Dorsolateral prefrontal cortex (tissue), 120 donors: ENCODE measurements at regions of chr3 and their contacts with region 1.

Region 1: GRCh38 chr3:197791113-197791891 is at the start of gene LRCH3:
- DNase-seq: peak; percentile 60 to 88 (median 72)
- H3K4me3 ChIP-seq: peak within 1 kb of the TSS; percentile 69 to 98 (median 90)
- H3K27ac ChIP-seq: peak within 1 kb of the TSS; percentile 68 to 98 (median 94)
- H3K27me3 ChIP-seq: no peaks in the 10 kb centered on the region
- CTCF ChIP-seq: peak in 21 of 56 donors; percentile 5 to 45 (median 18)
- total RNA-seq, gene LRCH3: 42.2 to 98.1 (median 64.6) TPM

Region 2: GRCh38 chr3:197811343-197811742 is 20.0 kb after region 1 on chr3:
- intact Hi-C with region 1: no loop called
- DNase-seq: peak in 1 of 10 donors; percentile 33
- H3K4me3 ChIP-seq: peak overlapping the region in 15 of 59 donors; percentile 0 to 37 (median 15)
- H3K27ac ChIP-seq: peak overlapping the region in 49 of 59 donors; percentile 1 to 87 (median 64)
- H3K27me3 ChIP-seq: no peaks in the 10 kb centered on the region
- CTCF ChIP-seq: no peak

Region 3: DNA sequence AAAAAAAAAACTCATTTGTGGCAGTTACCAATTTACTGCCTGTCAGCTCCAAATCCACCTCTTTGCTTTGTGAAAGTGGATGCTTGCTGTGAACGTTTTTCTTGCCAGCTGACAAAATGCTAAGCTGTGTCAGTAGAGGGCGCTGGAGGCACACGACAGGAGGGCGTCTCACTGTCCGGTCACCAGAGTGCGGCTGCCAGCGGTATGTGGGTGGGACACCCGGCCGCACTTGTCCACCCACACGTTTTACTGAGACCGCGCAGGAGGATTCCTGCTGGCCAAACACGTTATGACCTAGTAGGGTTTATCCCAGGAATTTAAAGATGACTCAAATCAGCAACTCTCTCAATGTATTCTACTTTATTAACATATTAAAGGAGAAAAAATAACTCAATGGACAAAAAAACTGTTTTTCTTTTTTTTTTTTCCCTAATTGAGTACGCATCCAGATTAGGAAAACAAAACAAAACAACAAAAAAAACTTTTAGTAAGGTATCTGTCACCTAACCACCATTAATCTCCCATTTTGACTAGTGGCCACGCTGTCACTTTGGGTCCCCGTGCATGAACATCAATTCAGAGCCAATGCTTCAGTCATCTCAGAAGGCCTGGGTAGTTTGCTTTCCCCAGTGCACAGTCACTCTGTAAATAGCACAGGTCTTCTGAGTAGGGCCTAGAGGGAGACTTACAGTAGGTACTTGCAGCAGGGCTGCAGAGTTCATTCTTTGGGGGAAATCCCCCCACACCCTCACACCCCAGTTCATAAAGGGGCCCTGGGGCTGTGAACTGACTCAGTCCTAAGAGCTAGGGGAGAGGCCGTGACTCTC is 114.9 kb after region 1 on chr3:
- intact Hi-C with region 1: loop called in 1 of 2 experiments (anchors 10 kb)
- DNase-seq: peak; percentile 62 to 86 (median 82)
- H3K4me3 ChIP-seq: peak overlapping the region in 26 of 59 donors; percentile 7 to 48 (median 24)
- H3K27ac ChIP-seq: peak overlapping the region in 1 of 59 donors; percentile 4
- H3K27me3 ChIP-seq: no peaks in the 10 kb centered on the region
- CTCF ChIP-seq: peak; percentile 52 to 97 (median 89)